A549 (cell line): ENCODE measurements at regions of chr7 and their contacts with region 1.

Region 1: DNA sequence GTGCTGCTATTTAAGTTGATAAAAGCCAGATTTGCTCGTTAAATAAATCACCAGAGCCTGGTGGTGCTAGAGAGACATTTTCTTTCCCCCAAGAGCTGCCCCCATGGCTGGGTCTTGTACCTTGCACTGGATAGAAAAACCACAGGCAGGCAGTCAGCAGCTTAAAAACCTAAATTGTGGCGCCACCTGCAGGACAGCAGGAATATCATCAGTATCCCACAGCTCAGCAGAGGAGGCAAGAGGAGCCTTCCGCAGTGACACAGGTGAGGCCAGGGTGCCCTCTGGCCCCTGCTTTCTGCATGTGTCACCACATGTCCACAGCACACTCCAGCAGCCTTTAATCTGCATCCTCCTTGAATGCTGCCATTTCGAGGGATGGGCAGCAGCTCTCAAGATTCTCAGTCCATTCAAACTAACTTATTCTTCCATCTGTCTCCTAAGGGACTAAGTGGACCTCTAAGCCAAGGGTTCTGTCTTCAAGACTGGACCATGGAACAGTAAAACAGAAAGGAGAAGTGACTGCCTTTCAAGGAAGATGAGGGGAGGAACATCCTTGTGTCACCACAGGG is 4.5 kb upstream of the PLXNA4 start:
- DNase-seq: peak; percentile 64 to 81
- ATAC-seq: peak; percentile 70 to 88
- H3K4me3 ChIP-seq: no peak overlapping the region
- H3K27ac ChIP-seq: no peak overlapping the region
- H3K4me1 ChIP-seq: peaks cover 5% of the 10 kb centered on the region; the same call in 2 of the 3 replicates
- CTCF ChIP-seq: peak; percentile 84
- EP300 ChIP-seq: no peak
- POLR2A ChIP-seq: no peak
- RAD21 ChIP-seq: peak; percentile 84 to 88

Region 2: GRCh38 chr7:131688738-131689661 is 891.8 kb before region 1 on chr7:
- CTCF ChIA-PET with region 1: interaction called, 67 read pairs
- POLR2A ChIA-PET with region 1: no interaction called
- DNase-seq: peak; percentile 57 to 94
- ATAC-seq: peak; percentile 73 to 84
- H3K4me3 ChIP-seq: no peak overlapping the region
- H3K27ac ChIP-seq: no peak overlapping the region
- H3K4me1 ChIP-seq: no peaks in the 10 kb centered on the region
- CTCF ChIP-seq: peak; percentile 92
- EP300 ChIP-seq: no peak
- POLR2A ChIP-seq: no peak
- RAD21 ChIP-seq: peak; percentile 94 to 97

Region 3: DNA sequence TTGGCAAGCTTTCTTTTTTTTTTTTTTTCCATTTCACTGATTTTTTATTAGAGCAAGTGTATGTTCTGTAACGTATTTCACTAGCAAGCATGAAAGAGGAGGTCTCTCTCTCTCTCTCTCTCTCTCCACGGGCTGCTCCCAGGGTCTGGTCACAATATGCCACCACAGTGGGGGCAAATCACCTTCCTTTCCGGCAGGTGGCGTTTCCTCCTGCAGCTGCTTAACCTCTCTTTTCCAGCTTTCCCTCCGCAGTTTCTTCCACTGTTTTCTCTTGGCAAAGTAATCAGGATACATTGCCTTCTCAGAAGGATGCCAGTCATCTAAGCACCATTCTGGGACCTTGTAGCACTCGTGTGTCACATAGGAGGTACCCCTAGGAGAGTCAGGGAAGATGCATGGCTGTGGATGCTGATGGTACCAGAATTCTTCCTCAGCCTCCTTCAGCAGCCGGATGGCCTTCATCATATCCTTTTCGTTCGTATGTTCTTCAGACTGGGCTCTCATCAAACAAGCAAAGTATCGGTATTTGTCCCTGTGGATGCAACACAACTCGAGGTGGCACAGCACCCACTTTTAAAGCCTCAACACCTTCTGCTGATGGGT is 827.1 kb before region 1 on chr7:
- CTCF ChIA-PET with region 1: interaction called, 10 read pairs
- POLR2A ChIA-PET with region 1: no interaction called
- DNase-seq: peak; percentile 52 to 61
- ATAC-seq: peak; percentile 93
- H3K4me3 ChIP-seq: no peak overlapping the region
- H3K27ac ChIP-seq: no peak overlapping the region
- H3K4me1 ChIP-seq: no peaks in the 10 kb centered on the region
- CTCF ChIP-seq: peak; percentile 60
- EP300 ChIP-seq: no peak
- POLR2A ChIP-seq: no peak
- RAD21 ChIP-seq: peak; percentile 47 to 66

Region 4: DNA sequence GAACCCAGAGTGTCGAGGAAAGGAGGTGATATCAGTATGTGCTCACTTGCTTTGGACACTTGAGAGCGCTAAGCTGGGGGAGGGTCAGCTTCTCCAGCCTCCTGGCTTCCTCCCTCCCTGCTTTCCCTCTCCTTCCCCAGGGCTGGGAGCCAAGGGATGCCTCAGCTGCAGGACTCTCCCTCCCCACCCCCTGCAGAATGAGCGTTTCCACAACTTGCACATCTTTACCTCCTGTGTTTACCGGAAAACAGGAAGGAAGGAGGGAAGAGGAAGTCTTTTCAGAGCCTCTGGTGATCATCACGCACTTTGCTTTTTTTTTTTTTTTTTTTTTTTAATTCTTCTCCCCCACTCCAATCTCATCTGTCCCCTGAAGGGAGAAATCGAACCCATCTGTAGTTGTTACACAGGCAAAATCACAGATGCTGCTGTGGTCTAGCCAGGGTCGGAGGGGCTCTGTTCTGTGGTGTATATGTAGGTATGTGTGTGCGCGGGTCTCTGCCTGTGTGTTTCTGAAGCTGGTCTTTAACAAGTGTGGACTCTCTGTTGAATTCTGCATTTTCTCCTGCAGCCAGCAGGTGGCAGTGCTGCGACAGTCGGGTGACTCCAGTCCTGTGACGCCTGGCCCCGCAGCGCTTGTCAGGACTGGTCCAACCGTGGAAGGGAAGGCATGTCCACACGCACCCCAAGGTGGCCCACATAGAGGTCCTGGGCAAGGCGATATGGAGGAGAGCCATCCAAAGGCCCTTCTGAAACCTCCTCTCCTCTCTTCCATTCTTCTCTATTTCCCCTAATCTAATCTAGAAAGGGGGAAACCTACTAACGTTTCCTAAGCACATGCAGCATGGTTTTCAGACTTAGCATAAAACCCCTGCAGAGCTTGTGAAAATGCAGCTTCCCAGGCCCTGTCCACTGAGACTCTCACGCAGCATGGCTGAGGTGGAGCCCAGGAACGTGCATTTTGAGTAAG is 262.2 kb before region 1 on chr7:
- CTCF ChIA-PET with region 1: interaction called, 35 read pairs
- POLR2A ChIA-PET with region 1: interaction called, 3 read pairs
- DNase-seq: peak; percentile 85 to 93
- ATAC-seq: peak; percentile 88 to 99
- H3K4me3 ChIP-seq: no peak overlapping the region
- H3K27ac ChIP-seq: no peak overlapping the region
- H3K4me1 ChIP-seq: no peaks in the 10 kb centered on the region
- CTCF ChIP-seq: peak; percentile 88
- EP300 ChIP-seq: no peak
- POLR2A ChIP-seq: no peak
- RAD21 ChIP-seq: peak; percentile 85 to 86

Region 5: DNA sequence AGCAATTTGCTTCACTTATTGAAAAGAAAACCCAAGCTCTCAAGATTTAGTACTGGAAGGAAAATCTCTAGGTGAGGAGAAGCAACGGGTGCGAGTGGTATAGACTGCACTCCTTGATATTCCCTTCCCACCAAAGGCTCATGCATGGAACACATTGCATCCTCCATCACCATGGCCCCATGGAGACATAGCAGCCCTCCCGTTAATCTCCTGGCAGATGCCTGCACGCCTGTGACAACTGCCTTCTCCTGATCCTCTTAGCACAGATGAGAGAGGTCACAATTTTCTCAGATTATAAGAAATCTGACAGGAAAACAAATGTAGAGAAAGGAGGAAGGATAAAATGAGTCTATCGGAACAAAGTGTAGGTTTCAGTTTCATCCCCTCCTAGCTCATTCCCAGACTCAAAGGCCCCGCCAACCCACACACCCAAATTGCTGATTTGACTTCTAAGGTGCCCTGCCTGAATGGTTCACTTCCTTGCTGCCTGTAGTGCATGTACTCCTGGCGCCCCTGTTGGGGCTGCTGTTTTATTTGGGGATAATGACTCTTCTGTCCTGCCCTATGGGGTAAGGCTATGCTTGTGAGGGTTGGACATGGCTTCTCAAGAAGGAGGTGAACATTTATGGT is 54.6 kb before region 1 on chr7:
- CTCF ChIA-PET with region 1: no interaction called
- POLR2A ChIA-PET with region 1: no interaction called
- DNase-seq: no peak
- ATAC-seq: no peak
- H3K4me3 ChIP-seq: no peak overlapping the region
- H3K27ac ChIP-seq: no peak overlapping the region
- H3K4me1 ChIP-seq: no peaks in the 10 kb centered on the region
- CTCF ChIP-seq: no peak
- EP300 ChIP-seq: no peak
- POLR2A ChIP-seq: no peak
- RAD21 ChIP-seq: no peak

Region 6: GRCh38 chr7:132569884-132570614 is 10.8 kb before region 1 on chr7:
- CTCF ChIA-PET with region 1: interaction called, 15 read pairs
- POLR2A ChIA-PET with region 1: no interaction called
- DNase-seq: no peak
- ATAC-seq: no peak
- H3K4me3 ChIP-seq: no peak overlapping the region
- H3K27ac ChIP-seq: no peak overlapping the region
- H3K4me1 ChIP-seq: no peaks in the 10 kb centered on the region
- CTCF ChIP-seq: no peak
- EP300 ChIP-seq: no peak
- POLR2A ChIP-seq: no peak
- RAD21 ChIP-seq: no peak